HAP-1 (cell line): ENCODE measurements at regions of chr18 and their contacts with region 1.

Region 1: DNA sequence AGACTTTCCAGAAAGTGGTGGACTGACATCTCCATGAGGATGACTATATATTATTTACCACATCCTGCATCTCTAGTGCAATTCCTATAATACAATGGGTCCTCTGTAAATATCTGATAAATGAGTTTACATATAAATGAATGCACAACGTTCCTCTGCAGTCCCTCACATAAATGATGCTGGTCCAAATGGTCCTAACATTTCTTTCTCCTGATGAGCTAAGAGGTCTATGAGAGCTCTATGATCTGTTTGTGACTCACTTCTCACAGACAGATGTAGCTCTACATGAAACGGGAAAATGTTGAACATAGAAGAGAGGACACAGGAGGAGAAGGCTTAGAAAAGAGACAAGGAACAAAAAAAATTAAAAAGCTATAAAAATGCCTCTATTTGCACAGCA is 201.2 kb upstream of the PIK3C3 start:
- DNase-seq: no peak
- H3K4me3 ChIP-seq: no peak overlapping the region
- H3K4me1 ChIP-seq: no peaks in the 10 kb centered on the region
- H3K27me3 ChIP-seq: no peaks in the 10 kb centered on the region

Region 2: DNA sequence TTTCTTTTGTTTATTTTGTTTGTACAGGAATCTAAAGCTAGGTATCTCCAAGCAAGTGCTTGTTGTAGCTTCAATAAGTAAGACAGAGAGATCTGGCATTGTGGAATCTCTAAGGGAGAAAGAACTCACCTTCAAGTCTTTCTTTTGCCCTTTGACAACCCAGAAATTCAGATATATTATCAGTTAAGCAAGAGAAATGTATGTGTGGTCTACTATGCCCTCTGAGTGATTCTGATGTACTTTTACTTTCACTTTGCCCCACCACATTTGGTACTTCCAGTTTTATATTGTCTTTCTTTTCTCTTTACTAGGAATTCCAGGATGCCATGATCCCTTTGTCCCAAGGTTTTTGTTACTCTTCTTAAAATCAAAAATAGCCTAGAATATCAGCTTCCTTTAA is 58.4 kb before region 1 on chr18:
- in situ Hi-C with region 1: no loop called
- DNase-seq: peak in 1 of 2 experiments; percentile 43
- H3K4me3 ChIP-seq: no peak overlapping the region
- H3K4me1 ChIP-seq: peaks cover 8% of the 10 kb centered on the region; the same call in 1 of the 2 replicates
- H3K27me3 ChIP-seq: no peaks in the 10 kb centered on the region

Region 3: DNA sequence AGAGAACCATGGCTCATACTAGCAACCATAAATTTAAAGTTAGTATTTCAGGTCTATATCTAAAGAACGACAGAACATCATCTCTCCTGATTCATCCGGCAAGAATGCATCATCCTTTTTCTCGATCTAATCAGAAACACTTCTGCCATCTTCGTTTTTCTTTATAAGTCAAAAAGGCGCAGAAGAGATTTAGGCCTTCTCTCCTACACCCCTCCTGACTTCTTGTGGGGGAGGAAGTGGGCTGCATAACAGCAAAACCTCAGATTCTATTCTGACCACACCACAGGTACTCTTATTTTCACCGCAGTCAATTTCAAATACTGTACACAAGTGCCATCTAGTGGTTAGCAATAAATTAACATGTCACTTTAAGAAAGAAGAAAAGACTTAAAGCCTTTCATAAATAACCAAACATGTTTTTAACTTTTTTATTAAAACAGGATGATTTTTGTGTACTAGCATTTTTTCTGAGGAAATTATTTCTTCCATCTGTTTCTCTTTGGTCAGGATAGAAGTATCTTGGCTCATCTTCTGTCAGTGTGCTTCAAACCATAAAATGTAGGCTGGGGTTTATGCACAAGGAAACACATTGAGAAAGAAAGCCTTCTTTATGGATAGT is 152.8 kb after region 1 on chr18:
- in situ Hi-C with region 1: loop called (anchors 10 kb)
- DNase-seq: peak; percentile 12 to 69
- H3K4me3 ChIP-seq: no peak overlapping the region
- H3K4me1 ChIP-seq: no peaks in the 10 kb centered on the region
- H3K27me3 ChIP-seq: no peaks in the 10 kb centered on the region